Activated CD8-positive, alpha-beta T cell treated with anti-CD3 and anti-CD28 coated beads, Interleukin-2, amount 10 ng/mL, durations not matched to agents 7 days and 5 days (primary cell): ENCODE measurements at regions of chr13 and their contacts with region 1.

Region 1: GRCh38 chr13:91313103-91313502 is 34.4 kb upstream of the MIR17HG start:
- DNase-seq: peak; percentile 44
- ATAC-seq: peak; percentile 73
- H3K4me3 Mint-ChIP-seq: peak overlapping the region; percentile 22
- H3K27ac Mint-ChIP-seq: no peak overlapping the region
- H3K4me1 Mint-ChIP-seq: peaks cover 17% of the 10 kb centered on the region
- H3K27me3 Mint-ChIP-seq: peaks cover 19% of the 10 kb centered on the region

Region 2: GRCh38 chr13:91216928-91217690 is 96.0 kb before region 1 on chr13:
- CTCF ChIA-PET with region 1: no interaction called
- POLR2A ChIA-PET with region 1: no interaction called
- DNase-seq: no peak
- ATAC-seq: no peak
- H3K4me3 Mint-ChIP-seq: no peak overlapping the region
- H3K27ac Mint-ChIP-seq: no peak overlapping the region
- H3K4me1 Mint-ChIP-seq: peaks cover 5% of the 10 kb centered on the region
- H3K27me3 Mint-ChIP-seq: peaks cover 6% of the 10 kb centered on the region

Region 3: DNA sequence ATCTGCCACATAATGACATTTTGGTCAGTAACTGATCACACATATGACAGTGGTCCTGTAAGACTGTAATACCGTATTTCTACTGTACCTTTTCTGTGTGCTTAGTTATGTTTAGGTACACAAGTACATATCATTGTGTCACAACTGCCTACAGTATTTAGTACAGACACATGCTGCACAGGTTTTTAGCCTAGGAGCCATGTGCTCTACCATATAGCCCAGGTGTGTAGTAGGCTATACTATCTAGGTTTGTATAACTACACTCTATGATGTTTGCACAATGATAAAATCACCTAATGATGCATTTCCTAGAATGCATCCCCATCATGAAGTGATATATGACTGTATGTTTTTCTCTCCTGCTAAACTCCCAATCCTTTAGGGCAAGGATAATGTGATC is 26.8 kb before region 1 on chr13:
- CTCF ChIA-PET with region 1: no interaction called
- POLR2A ChIA-PET with region 1: no interaction called
- DNase-seq: no peak
- ATAC-seq: no peak
- H3K4me3 Mint-ChIP-seq: no peak overlapping the region
- H3K27ac Mint-ChIP-seq: no peak overlapping the region
- H3K4me1 Mint-ChIP-seq: no peaks in the 10 kb centered on the region
- H3K27me3 Mint-ChIP-seq: peaks cover 5% of the 10 kb centered on the region

Region 4: GRCh38 chr13:91323349-91323748 is 10.2 kb after region 1 on chr13:
- CTCF ChIA-PET with region 1: interaction called, 27 read pairs
- POLR2A ChIA-PET with region 1: no interaction called
- DNase-seq: peak; percentile 47
- ATAC-seq: peak; percentile 53
- H3K4me3 Mint-ChIP-seq: no peak overlapping the region
- H3K27ac Mint-ChIP-seq: no peak overlapping the region
- H3K4me1 Mint-ChIP-seq: peaks cover 16% of the 10 kb centered on the region
- H3K27me3 Mint-ChIP-seq: peaks cover 8% of the 10 kb centered on the region

Region 5: GRCh38 chr13:91347202-91347995 is 34.3 kb after region 1 on chr13 and contains the start of gene MIR17HG:
- CTCF ChIA-PET with region 1: interaction called, 17 read pairs
- POLR2A ChIA-PET with region 1: no interaction called
- DNase-seq: peak; percentile 91
- ATAC-seq: peak; percentile 73
- H3K4me3 Mint-ChIP-seq: peak within 1 kb of the TSS; percentile 85
- H3K27ac Mint-ChIP-seq: peak within 1 kb of the TSS; percentile 93
- H3K4me1 Mint-ChIP-seq: peaks cover 47% of the 10 kb centered on the region
- H3K27me3 Mint-ChIP-seq: no peaks in the 10 kb centered on the region
- total RNA-seq, gene MIR17HG: 8.1 to 9.9 TPM